Aorta (tissue), 5 donors: ENCODE measurements at regions of chr20 and their contacts with region 1.

Region 1: DNA sequence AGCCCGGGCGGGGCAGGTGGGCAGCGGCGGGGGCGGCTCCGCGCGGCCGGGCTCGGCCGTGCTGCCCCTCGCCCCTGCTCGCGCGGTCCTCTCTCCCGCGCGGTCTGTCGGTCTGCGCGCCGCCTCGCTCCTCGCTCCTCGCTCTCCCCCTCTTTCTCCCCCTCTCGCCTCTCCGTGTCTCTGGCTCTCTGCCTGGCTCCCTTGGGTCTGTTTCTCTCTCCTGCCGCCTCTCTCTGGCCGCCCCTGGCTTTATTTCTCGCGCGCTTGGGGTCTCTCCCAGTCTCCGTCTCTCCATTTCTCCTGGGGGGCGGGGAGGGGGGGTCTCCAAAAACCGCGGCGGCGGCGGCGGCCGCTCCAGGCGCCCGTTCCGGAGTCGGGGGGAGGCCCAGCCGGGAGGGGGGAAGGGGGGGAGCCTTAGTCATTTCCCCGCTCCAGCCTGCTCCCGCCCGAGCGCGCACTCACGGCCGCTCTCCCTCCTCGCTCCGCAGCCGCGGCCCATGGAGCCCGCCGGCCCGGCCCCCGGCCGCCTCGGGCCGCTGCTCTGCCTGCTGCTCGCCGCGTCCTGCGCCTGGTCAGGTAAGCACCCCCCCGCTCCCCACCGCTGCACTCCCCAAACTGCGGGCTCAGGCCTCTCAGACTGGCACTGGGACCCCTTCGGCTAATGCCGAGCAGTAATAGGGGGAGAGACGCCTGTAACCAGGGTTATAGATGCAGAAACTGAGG is at the start of gene SIRPA:
- DNase-seq: peak; percentile 80 to 91
- ATAC-seq: peak; percentile 70
- H3K4me3 ChIP-seq: peak within 1 kb of the TSS; percentile 67 to 92
- H3K27ac ChIP-seq: peak within 1 kb of the TSS; percentile 73 to 95
- H3K4me1 ChIP-seq: peaks cover 0 to 4% of the 10 kb centered on the region in 2 donors
- H3K27me3 ChIP-seq: no peaks in the 10 kb centered on the region
- total RNA-seq, gene SIRPA: 41.4 to 62.9 TPM

Region 2: GRCh38 chr20:1631309-1632151 is 263.6 kb before region 1 on chr20:
- intact Hi-C with region 1: no loop called
- DNase-seq: no peak
- ATAC-seq: no peak
- H3K4me3 ChIP-seq: no peak overlapping the region
- H3K27ac ChIP-seq: no peak overlapping the region
- H3K4me1 ChIP-seq: no peaks in the 10 kb centered on the region
- H3K27me3 ChIP-seq: no peaks in the 10 kb centered on the region

Region 3: DNA sequence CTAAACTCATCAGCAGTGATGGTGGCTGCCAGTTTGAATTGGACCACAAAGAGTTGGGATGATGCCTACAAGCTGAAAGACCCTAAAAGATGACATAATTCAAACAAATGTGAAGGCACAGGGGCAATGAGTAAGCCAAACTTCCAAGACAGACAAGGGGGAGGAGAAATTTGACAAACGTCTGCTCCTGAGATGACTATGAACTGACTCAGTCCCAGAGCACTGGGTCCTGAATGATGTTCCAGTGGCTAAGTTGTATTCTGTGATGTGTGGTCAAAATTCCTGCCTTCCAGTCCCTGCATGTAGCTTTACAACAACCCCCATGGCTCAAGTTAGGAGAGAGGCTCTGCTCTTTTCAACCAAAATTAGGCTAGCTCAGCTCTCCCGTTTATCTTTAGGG is 86.0 kb before region 1 on chr20:
- intact Hi-C with region 1: loop called in 1 of 2 experiments (anchors 2 kb)
- DNase-seq: no peak
- ATAC-seq: no peak
- H3K4me3 ChIP-seq: no peak overlapping the region
- H3K27ac ChIP-seq: peak overlapping the region in 1 of 2 donors; percentile 55
- H3K4me1 ChIP-seq: peaks cover under 1 to 5% of the 10 kb centered on the region in 2 donors
- H3K27me3 ChIP-seq: no peaks in the 10 kb centered on the region

Region 4: DNA sequence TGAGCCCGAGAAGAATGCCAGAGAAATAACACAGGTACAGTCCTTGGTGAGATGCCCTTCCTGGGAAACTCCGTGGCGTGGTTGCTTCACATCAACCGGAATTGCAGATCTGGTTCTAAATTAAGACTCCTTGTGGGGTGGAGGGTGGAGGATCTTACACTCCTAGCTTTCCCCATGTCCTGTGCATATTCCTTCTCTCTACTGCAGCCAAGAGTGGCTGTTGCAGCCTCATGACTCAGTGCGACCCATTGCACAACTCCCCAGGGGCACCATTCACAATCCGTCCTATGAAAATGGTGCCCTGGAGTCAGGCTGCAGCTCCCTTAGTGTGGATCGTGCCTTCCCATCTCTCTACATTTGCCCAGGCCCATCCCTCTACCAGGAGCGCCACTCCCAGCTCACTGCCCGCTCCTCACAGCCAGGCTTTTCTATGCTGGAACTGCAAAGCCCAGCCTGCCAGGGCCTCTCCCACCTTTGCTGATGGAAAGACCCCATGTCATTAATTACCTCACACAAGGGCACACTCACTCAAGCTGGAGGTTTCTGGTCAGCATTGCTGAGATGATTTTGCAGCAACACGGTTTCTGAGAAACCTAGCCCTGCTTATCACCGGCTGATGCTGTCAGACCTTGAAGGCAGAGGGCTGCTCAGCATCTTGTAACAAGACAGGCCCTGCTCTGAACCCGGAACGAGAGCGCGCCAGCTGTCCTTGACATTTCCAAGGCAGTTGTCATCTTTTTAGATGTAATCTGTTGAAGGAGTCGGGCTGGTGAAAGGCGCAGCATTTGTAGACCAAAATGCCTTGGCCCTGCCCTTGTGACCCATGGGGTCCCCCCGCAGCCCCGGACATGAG is 39.8 kb after region 1 on chr20:
- intact Hi-C with region 1: loop called in 1 of 2 experiments (anchors 5 kb)
- DNase-seq: peak; percentile 88 to 93
- ATAC-seq: peak; percentile 87
- H3K4me3 ChIP-seq: no peak overlapping the region
- H3K27ac ChIP-seq: no peak overlapping the region
- H3K4me1 ChIP-seq: no peaks in the 10 kb centered on the region
- H3K27me3 ChIP-seq: no peaks in the 10 kb centered on the region

Region 5: DNA sequence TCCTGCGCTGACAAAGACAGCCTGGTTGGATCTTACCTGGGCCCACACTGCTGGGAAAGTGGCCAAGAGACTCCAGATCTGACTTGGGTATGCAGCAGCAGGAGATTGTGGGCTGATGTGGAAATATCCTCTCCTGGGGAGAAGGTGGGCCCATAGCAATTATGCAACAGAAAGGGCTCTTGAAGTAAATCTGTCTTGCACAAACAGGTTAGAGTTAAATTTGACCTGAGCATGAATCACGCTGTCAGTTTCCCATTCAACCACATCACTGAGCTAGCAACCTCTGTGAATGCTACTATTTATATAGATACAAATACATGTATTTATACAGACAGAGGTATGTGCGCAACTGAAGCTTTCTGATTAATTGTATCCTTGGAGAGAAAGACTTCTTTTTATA is 127.1 kb after region 1 on chr20:
- intact Hi-C with region 1: no loop called
- DNase-seq: no peak
- ATAC-seq: no peak
- H3K4me3 ChIP-seq: no peak overlapping the region
- H3K27ac ChIP-seq: no peak overlapping the region
- H3K4me1 ChIP-seq: no peaks in the 10 kb centered on the region
- H3K27me3 ChIP-seq: no peaks in the 10 kb centered on the region

Region 6: GRCh38 chr20:2101865-2102584 is 206.9 kb after region 1 on chr20:
- intact Hi-C with region 1: loop called in 1 of 2 experiments (anchors 5 kb)
- DNase-seq: peak; percentile 95 to 97
- ATAC-seq: peak; percentile 97
- H3K4me3 ChIP-seq: peak overlapping the region; percentile 52 to 67
- H3K27ac ChIP-seq: peak overlapping the region; percentile 58 to 92
- H3K4me1 ChIP-seq: peaks cover 2 to 12% of the 10 kb centered on the region in 2 donors
- H3K27me3 ChIP-seq: no peaks in the 10 kb centered on the region